Activated CD4-positive, alpha-beta T cell treated with anti-CD3 and anti-CD28 coated beads for 36 hours (primary cell): ENCODE measurements at regions of chr7 and their contacts with region 1.

Region 1: GRCh38 chr7:7944619-7945282 is 23.8 kb upstream of the GLCCI1 start:
- DNase-seq: peak; percentile 79
- ATAC-seq: peak; percentile 94
- H3K4me3 Mint-ChIP-seq: peak overlapping the region; percentile 58
- H3K27ac Mint-ChIP-seq: peak overlapping the region; percentile 90
- H3K4me1 Mint-ChIP-seq: peaks cover 21% of the 10 kb centered on the region
- H3K27me3 Mint-ChIP-seq: no peaks in the 10 kb centered on the region

Region 2: GRCh38 chr7:7344583-7344982 is 600.2 kb before region 1 on chr7:
- CTCF ChIA-PET with region 1: no interaction called
- POLR2A ChIA-PET with region 1: no interaction called
- intact Hi-C with region 1: no loop called
- DNase-seq: no peak
- ATAC-seq: no peak
- H3K4me3 Mint-ChIP-seq: no peak overlapping the region
- H3K27ac Mint-ChIP-seq: no peak overlapping the region
- H3K4me1 Mint-ChIP-seq: no peaks in the 10 kb centered on the region
- H3K27me3 Mint-ChIP-seq: peaks cover 9% of the 10 kb centered on the region

Region 3: GRCh38 chr7:8125680-8126444 is 181.1 kb after region 1 on chr7:
- CTCF ChIA-PET with region 1: no interaction called
- POLR2A ChIA-PET with region 1: interaction called, 3 read pairs
- intact Hi-C with region 1: loop called in 1 of 2 experiments (anchors 1 kb)
- DNase-seq: peak; percentile 88
- ATAC-seq: peak; percentile 93
- H3K4me3 Mint-ChIP-seq: peak overlapping the region; percentile 62
- H3K27ac Mint-ChIP-seq: peak overlapping the region; percentile 95
- H3K4me1 Mint-ChIP-seq: peaks cover 81% of the 10 kb centered on the region
- H3K27me3 Mint-ChIP-seq: peaks cover 5% of the 10 kb centered on the region